ENCODE measurements at regions of chr19 and their contacts with region 1.

Region 1: GRCh38 chr19:17390665-17391370 is 3.2 kb downstream of the CCDC194 start:
- DNase-seq: no peak
- ATAC-seq: peak; percentile 99
- H3K4me3 ChIP-seq: peak overlapping the region; percentile 63 to 75
- H3K27ac ChIP-seq: no peak overlapping the region
- H3K4me1 ChIP-seq: peaks cover 5% of the 10 kb centered on the region
- H3K27me3 ChIP-seq: no peaks in the 10 kb centered on the region
- CTCF ChIP-seq: peak; percentile 86

Region 2: DNA sequence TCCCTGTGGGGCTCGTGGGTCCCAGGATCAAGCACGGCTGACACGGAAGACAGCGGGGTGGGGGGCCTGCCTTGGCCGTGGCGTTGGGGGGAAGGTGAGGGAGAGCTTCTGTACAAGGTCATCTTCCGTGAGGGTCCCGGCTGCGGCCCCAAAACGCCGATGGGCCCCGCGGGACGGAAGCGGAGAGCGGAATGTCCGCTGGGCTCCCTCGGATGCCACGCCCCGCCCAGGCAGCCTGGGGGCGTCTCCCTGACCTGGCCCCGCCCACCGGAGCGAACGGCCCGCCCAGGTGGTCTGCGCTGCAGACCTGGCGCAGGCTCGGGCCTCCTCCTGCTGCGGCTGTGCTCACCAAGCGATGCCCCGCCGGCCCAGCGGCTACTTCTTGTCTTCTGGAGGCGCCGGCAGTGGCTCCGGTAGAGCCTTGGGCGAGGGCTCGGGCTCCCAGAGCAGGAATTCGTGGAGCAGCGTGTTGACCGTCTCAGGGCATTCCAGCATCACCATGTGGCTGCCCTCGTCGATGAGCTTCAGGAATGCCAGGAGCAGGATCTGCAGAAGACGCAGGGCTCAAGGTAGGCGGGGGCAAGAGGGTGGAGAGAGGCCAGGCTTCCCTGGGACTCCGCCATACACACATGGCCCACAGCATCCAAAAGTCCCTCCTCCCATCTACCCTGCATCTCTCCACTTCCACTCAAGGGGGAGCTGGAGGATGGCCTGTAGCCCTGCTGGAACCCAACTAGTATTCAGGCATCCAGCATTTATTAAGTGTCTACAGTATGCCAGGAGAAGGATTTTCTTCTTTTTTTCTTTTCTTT is 98.3 kb before region 1 on chr19:
- CTCF ChIA-PET with region 1: interaction called, 10 read pairs
- POLR2A ChIA-PET with region 1: no interaction called
- in situ Hi-C with region 1: no loop called
- intact Hi-C with region 1: no loop called
- DNase-seq: peak; percentile 72
- ATAC-seq: peak; percentile 93
- H3K4me3 ChIP-seq: peak overlapping the region; percentile 52 to 59
- H3K27ac ChIP-seq: peak overlapping the region; percentile 71
- H3K4me1 ChIP-seq: peaks cover 3% of the 10 kb centered on the region; the same call in 1 of the 2 replicates
- H3K27me3 ChIP-seq: no peaks in the 10 kb centered on the region
- CTCF ChIP-seq: peak; percentile 82

Region 3: GRCh38 chr19:17469481-17470067 is 78.8 kb after region 1 on chr19:
- CTCF ChIA-PET with region 1: no interaction called
- POLR2A ChIA-PET with region 1: no interaction called
- in situ Hi-C with region 1: no loop called
- intact Hi-C with region 1: loop called (anchors 10 kb)
- DNase-seq: peak; percentile 82
- ATAC-seq: peak; percentile 84
- H3K4me3 ChIP-seq: peak overlapping the region; percentile 58 to 77
- H3K27ac ChIP-seq: peak overlapping the region; percentile 79
- H3K4me1 ChIP-seq: peaks cover 6% of the 10 kb centered on the region
- H3K27me3 ChIP-seq: no peaks in the 10 kb centered on the region
- CTCF ChIP-seq: no peak

Measured in Panc1 (cell line).